ENCODE measurements at regions of chr2 and their contacts with region 1.

Region 1: DNA sequence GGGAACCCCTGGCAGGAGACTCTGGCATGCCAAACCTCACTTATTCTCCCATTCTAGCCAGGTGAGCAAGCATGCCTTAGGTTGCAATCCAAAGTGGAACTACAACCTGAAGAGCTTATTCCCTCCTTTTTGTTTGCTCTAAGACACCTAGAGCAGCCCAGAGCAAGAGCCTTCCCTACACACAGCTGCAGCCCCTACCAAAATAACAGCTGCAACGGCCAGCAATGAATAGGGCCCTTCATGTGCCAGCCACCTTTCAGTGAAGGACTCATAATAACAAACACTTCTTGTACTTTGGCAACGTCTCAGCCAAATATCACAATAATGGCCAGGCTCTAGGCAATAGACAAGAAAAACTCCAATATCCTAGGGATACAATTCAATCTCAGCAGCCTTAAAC is 178.7 kb downstream of the ALK start:
- DNase-seq: no peak
- H3K4me3 ChIP-seq: no peak overlapping the region
- H3K27ac ChIP-seq: no peak overlapping the region
- H3K4me1 ChIP-seq: no peaks in the 10 kb centered on the region
- H3K27me3 ChIP-seq: no peaks in the 10 kb centered on the region
- CTCF ChIP-seq: no peak
- EP300 ChIP-seq: no peak
- POLR2A ChIP-seq: no peak

Region 2: GRCh38 chr2:29799628-29800027 is 57.0 kb after region 1 on chr2:
- intact Hi-C with region 1: loop called in 1 of 4 experiments (anchors 2 kb)
- DNase-seq: no peak
- H3K4me3 ChIP-seq: no peak overlapping the region
- H3K27ac ChIP-seq: no peak overlapping the region
- H3K4me1 ChIP-seq: no peaks in the 10 kb centered on the region
- H3K27me3 ChIP-seq: no peaks in the 10 kb centered on the region
- CTCF ChIP-seq: no peak
- EP300 ChIP-seq: no peak
- POLR2A ChIP-seq: no peak